ENCODE measurements at regions of chr6 and their contacts with region 1.

Region 1: DNA sequence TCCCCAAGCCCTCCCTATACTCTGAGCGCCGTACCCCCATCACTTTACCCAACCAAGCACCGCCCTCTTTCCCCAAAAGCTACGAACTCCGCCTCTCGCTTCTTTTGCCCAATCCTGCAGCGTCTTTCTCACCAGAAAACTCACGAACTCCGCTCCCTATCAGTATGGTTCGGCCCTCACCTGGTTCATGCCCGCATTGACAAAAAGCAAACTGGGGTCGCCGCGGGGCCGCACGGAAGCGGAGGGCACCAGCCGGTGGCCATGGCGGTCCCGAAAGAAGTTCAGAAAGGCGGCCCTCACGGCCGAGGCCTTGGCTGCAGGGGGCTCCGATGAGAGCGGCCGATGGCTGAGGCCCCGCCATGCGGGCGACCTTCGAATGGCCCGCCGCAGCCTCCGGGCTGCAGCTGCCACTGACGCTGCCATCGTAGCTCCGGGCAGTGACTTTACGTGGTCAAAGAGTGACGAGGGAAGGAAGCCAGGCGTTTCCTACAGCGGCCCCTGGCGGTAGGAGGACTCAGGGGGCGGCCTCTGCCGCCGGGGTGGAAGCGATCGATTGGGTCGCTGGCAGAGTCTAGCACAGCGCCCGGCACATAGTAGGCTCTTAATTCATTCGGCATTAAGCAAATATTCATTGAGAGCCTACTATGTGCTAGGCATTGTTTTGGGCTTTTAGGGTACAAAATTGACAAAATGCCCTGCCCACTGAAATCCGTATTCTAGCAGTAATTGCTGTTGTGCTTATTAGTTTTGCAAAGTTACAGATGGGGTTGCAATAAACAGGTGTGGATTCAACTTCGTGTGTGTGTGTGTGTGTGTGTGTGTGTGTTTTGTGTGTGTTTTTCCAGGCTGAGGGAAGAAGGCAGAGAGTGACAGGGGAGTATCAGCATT is at the start of gene AARS2:
- DNase-seq: peak; percentile 97
- ATAC-seq: peak; percentile 90
- H3K4me3 Mint-ChIP-seq: peak within 1 kb of the TSS; percentile 99
- H3K27ac Mint-ChIP-seq: peak within 1 kb of the TSS; percentile 95
- H3K4me1 Mint-ChIP-seq: peaks cover 8% of the 10 kb centered on the region
- H3K27me3 Mint-ChIP-seq: no peaks in the 10 kb centered on the region
- CTCF ChIP-seq: peak; percentile 90
- total RNA-seq, gene AARS2: 26.8 to 29.7 TPM (median 28.9 TPM) in 3 replicates

Region 2: DNA sequence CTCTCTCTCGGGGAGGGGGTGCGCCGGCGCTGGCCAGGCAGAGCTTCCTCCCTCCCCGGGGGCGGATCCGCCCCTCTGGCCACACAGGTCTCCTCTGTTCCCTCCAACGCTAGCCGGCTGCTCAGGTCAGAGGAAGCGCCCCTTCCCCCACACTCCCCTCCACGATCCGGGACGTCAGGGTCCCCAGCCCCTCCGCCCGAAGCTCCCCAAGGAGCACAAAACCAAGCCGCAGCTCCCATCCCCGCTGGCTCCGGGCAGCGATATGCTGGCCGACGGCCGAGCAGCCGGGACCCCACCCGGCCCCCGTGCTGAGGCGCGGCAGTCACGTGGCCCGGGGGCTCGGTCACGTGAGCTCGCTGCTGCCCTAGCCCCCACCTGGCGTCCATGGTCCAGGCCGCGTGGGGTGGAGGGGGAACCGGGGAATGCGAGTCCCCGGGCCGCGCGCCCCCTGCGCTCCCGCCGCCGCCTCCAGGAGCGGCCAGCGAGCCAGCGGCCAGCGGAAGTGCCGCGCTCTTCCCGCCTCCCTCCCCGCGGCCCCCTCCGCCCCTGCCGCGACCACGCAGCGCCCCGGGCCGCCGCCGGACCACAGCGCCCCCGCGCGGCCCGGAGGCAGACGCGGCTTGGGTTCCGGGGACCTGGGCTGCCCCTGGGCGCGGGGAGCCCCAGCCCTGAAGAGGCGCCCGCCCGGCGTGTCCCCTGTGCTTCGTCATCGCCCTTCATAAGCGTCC is 56.0 kb before region 1 on chr6 and contains the start of gene SLC35B2:
- CTCF ChIA-PET with region 1: interaction called, 15 read pairs
- POLR2A ChIA-PET with region 1: interaction called, 7 read pairs
- DNase-seq: peak; percentile 76
- ATAC-seq: peak; percentile 31
- H3K4me3 Mint-ChIP-seq: peak within 1 kb of the TSS; percentile 83
- H3K27ac Mint-ChIP-seq: peak within 1 kb of the TSS; percentile 87
- H3K4me1 Mint-ChIP-seq: peaks cover 27% of the 10 kb centered on the region
- H3K27me3 Mint-ChIP-seq: no peaks in the 10 kb centered on the region
- CTCF ChIP-seq: peak; percentile 75
- total RNA-seq, gene SLC35B2: 28.9 to 36.7 TPM (median 30.8 TPM) in 3 replicates

Region 3: DNA sequence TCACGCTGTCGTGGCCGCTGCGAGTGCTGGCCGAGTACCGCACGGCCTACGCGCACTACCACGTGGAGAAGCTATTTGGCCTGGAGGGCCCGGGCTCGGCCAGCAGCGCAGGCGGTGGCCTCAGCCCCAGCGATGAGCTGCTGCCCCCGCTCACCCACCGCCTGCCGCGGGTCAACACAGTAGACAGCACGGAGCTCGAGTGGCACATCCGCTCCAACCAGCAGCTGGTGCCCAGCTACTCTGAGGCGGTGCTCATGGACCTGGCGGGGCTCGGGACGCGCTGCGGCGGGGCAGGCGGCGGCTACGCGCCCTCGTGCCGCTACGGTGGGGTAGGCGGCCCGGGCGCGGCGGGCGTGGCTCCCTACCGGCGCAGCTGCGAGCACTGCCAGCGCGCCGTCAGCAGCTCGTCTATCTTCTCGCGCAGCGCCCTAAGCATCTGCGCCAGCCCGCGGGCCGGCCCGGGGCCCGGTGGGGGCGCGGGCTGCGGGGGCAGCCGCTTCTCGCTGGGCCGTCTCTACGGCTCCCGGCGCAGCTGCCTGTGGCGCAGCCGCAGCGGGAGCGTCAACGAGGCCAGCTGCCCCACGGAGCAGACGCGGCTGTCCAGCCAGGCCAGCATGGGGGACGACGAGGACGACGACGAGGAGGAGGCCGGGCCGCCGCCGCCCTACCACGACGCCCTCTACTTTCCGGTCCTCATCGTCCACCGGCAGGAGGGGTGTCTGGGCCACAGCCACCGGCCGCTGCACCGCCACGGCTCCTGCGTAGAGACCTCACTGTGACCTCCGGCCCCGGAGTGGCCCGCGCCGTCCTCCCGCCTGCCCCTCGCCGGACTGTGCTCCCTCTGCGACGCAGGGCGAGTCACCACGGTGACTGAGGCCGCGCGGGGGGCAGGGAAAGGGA is 37.1 kb before region 1 on chr6:
- CTCF ChIA-PET with region 1: interaction called, 47 read pairs
- POLR2A ChIA-PET with region 1: interaction called, 3 read pairs
- DNase-seq: peak; percentile 60
- ATAC-seq: peak; percentile 54
- H3K4me3 Mint-ChIP-seq: no peak overlapping the region
- H3K27ac Mint-ChIP-seq: no peak overlapping the region
- H3K4me1 Mint-ChIP-seq: peaks cover 16% of the 10 kb centered on the region
- H3K27me3 Mint-ChIP-seq: peaks cover 30% of the 10 kb centered on the region
- CTCF ChIP-seq: no peak

Region 4: DNA sequence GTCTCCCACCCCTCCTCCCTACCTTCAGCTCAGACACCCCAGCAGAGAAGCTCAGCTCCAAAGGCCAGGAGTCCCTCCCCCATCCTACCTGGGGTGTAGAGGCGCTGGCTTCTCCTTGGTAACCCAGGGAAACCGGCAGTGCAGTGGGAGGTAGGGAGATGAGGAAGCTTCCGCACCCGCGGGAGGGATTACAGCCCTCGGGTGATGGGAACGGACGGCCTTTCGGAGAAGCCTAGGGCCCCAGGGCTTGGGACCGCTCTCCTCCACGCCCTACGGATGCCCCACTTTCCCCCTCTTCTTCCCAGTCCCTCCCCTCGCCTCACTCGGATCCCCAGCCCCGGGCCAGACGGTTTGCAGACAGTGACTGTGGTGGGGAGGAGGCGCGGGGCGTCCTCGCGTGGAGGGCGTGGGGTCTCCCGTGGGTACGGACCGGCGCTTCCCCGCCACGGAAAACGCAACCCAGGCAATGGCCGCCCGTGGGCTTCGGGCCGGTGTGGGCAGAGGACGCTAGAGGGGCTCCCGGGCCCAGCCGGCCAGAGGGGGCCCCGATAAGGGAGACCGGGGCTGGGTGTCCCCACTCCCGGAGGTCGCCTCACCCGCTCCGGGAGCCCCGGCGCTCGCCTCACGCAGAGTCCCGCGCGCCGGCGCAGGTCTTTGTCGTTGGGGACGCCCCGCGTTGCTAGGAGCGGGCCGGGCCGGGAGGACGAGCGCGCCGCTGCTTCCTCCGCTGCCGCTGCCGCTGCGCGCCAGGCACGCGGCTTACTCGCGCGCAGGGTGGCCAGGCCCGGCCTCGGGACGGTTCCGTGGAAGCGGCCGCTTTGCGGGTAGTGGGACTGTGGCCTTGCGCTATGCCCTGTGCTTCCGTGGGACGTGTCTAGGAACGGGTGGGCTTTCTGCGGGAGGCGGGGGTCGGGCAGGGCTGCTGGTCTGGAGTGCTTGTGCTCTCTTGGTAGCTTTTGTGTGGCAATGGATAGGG is 15.8 kb before region 1 on chr6:
- CTCF ChIA-PET with region 1: interaction called, 30 read pairs
- POLR2A ChIA-PET with region 1: interaction called, 7 read pairs
- DNase-seq: peak; percentile 67
- ATAC-seq: peak; percentile 62
- H3K4me3 Mint-ChIP-seq: peak overlapping the region; percentile 66
- H3K27ac Mint-ChIP-seq: no peak overlapping the region
- H3K4me1 Mint-ChIP-seq: peaks cover 11% of the 10 kb centered on the region
- H3K27me3 Mint-ChIP-seq: peaks cover 42% of the 10 kb centered on the region
- CTCF ChIP-seq: no peak

Region 5: DNA sequence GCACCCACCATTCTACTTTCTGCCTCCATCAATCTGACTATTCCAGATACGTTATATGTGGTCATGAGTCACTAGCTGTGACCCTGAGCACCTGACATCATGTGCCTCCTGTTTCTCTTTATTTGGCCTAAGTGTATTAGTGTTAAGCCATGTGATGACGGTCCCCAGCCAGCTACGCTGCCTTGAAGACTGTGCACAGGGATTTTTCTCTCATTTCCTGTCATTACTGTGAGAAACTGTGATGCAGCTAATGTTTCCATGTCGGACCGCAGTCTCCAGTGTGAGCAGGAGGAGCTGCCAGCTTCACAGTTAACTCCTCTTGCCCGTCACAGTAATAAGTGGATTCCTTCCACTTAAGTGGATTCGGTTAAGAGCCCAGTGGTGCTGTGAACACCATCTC is 19.4 kb after region 1 on chr6:
- CTCF ChIA-PET with region 1: interaction called, 16 read pairs
- POLR2A ChIA-PET with region 1: interaction called, 3 read pairs
- DNase-seq: no peak
- ATAC-seq: no peak
- H3K4me3 Mint-ChIP-seq: no peak overlapping the region
- H3K27ac Mint-ChIP-seq: no peak overlapping the region
- H3K4me1 Mint-ChIP-seq: peaks cover 33% of the 10 kb centered on the region
- H3K27me3 Mint-ChIP-seq: peaks cover 8% of the 10 kb centered on the region
- CTCF ChIP-seq: no peak

Region 6: DNA sequence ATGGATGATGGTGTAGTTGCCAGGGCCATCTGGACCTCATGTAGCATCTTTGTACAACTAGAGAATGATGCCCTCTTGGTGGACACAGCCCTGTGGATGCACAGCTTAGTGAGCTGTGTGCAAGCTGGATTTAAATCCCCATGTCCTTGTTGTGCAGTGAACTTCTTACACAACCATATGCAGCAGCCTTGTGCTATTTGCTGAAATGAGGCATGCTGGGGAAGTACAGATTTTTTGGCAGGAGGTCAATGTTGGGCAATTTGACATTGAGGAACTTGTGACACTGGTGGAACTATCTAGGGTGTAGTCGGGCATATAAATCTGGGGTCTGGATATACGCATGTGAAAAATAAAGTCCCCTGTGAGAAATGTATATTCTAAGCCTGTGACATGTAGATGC is 68.6 kb after region 1 on chr6:
- CTCF ChIA-PET with region 1: no interaction called
- POLR2A ChIA-PET with region 1: no interaction called
- DNase-seq: no peak
- ATAC-seq: no peak
- H3K4me3 Mint-ChIP-seq: no peak overlapping the region
- H3K27ac Mint-ChIP-seq: no peak overlapping the region
- H3K4me1 Mint-ChIP-seq: peaks cover 4% of the 10 kb centered on the region; the same call in 1 of the 2 replicates
- H3K27me3 Mint-ChIP-seq: no peaks in the 10 kb centered on the region
- CTCF ChIP-seq: no peak

Region 7: DNA sequence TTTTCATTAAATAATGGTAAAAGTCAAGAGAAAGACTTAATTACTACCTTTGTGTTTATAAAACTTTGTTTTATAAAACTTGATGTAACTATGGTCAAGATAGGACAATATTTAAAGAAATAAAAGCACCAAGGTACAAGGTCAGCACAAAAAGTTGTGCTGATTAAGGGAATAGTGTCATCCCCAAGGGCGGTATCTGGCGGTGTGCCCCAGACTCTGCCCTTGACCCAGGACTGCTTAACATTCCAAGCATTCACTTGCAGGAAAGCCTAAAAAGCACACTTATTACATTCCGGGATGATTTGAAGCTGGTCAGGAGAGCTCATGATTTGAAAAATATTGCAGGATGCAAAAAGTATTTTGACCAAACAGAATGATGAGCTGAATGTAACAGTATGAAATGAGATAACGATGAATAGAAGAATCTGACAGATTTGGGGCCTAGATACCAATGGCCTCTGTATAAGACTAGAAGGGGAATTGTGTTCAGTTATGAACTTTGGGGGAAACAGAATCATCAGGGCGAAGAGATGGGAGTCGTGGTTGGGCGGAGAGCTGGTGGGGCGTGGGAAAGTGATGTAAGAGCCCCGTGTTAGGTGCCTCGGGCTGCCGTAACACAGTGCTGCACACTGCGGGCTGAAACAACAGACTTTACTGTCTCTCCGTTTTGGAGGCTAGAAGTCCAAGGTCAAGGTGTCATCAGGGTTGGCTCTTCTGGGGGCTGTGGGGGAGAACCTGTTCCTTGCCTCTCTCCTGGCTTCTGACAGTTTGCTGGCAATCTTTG is 151.6 kb after region 1 on chr6:
- CTCF ChIA-PET with region 1: no interaction called
- POLR2A ChIA-PET with region 1: no interaction called
- DNase-seq: no peak
- ATAC-seq: peak; percentile 73
- H3K4me3 Mint-ChIP-seq: no peak overlapping the region
- H3K27ac Mint-ChIP-seq: no peak overlapping the region
- H3K4me1 Mint-ChIP-seq: peaks cover 5% of the 10 kb centered on the region
- H3K27me3 Mint-ChIP-seq: no peaks in the 10 kb centered on the region; the same call in 1 of the 2 replicates
- CTCF ChIP-seq: no peak